Activated B cell treated with CpG ODN at 0.5 μM for 24 hours (primary cell): ENCODE measurements at regions of chr6 and their contacts with region 1.

Region 1: DNA sequence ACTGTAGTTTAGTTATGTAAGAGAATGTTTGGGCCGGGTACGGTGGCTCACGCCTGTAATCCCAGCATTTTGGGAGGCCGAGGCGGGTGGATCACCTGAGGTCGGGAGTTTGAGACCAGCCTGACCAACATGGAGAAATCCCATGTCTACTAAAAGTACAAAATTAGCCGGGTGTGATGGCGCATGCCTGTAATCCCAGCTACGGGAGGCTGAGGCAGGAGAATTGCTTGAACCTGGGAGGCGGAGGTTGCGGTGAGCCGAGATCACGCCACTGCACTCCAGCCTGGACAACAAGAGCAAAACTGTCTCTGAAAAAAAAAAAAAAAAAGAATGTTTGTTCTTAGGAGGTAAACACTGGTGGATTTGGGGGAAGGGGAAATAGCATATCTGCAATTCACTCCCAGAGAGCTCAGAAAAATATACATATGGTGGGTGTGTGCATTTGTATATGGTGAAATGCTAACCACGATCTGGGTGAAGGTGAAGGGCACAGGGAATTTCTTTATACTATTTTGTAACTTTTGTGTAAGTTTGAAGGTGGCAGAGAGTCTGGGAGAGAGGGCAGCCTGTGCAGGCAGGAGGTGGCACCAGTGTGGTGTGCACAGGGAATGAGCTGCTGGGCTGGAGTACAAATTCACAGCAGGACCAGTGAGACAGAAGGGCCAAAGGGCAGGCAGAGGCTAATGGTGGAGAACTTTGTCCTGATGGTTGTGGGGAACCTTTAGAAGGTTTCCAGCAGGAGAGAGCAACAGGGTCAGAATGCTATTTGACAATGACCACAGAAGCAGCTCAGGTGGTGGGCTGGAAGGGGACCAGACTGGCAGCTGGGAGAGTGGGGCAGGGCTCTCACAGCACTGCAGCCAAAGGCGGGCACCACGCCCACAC is 42.4 kb downstream of the SSR1 start:
- DNase-seq: no peak
- ATAC-seq: no peak
- H3K4me3 Mint-ChIP-seq: no peak overlapping the region
- H3K27ac Mint-ChIP-seq: no peak overlapping the region
- H3K4me1 Mint-ChIP-seq: peaks cover under 1% of the 10 kb centered on the region
- H3K27me3 Mint-ChIP-seq: peaks cover 4% of the 10 kb centered on the region
- CTCF ChIP-seq: no peak

Region 2: DNA sequence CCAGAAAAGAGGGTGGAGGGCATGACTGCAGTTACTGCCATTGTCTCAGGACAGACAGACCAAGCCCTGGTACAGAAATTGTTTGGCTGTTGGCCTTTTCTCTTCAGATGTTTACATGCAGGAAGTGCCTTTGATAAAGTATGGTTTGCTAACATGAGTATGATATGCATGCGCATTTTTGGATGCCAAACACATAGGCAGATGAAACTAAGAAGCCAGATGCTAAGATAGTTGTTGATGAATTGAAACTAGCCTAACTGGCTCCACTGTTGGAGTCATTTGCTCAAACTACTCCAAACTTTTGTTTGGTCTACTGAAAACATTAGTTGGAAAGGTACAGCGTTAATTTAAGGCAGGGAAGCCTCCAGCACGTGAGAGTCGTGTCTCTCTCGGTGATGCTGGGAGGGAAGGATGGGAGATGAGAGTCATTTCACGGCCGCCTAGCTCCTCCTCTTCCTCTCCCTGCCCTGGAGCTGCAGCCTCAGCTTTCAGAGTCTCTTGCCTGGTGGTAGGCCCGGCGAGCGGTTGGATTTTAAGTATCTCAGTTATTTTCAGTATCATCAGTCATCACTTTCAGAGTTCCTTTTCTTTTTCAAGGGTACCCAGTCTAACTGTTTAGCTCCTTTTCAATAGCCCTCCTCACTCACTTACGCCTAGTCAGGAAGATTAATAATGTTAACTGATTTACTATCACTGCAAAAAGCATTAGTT is 133.1 kb before region 1 on chr6:
- CTCF ChIA-PET with region 1: no interaction called
- POLR2A ChIA-PET with region 1: no interaction called
- intact Hi-C with region 1: no loop called
- DNase-seq: no peak
- ATAC-seq: peak; percentile 33
- H3K4me3 Mint-ChIP-seq: peak overlapping the region; percentile 77
- H3K27ac Mint-ChIP-seq: peak overlapping the region; percentile 96
- H3K4me1 Mint-ChIP-seq: peaks cover 80% of the 10 kb centered on the region
- H3K27me3 Mint-ChIP-seq: no peaks in the 10 kb centered on the region
- CTCF ChIP-seq: no peak

Region 3: DNA sequence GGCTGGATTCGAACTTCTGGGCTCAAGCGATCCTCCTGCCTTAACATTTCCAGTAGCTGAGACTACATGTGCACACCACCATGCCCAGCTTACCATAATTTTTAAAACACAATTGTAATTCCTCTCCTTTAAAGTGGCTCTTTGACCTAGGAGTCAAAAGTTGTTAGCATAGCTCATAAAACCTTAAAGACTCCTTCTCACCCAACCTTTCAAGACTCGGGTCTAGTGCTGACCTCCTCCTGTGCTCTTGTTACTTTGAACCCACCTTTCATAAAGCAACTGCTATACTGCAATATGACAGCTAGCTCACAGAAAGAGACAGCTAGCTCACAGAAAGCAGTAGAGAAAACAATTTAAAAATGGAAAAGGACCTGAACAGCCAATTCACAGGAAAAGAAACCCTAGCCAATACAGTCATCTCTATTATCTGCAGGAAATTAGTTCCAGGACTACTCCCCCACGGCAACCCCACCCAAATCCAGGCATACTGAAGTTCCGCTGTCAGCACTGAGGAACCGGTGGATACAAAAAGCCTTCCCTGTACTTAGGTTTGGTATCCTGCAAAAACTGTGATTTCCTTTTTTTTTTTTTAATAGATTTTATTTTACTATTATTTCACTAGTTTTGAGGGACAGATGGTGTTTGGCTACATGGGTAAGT is 22.2 kb after region 1 on chr6:
- CTCF ChIA-PET with region 1: interaction called, 10 read pairs
- POLR2A ChIA-PET with region 1: no interaction called
- intact Hi-C with region 1: no loop called
- DNase-seq: no peak
- ATAC-seq: no peak
- H3K4me3 Mint-ChIP-seq: no peak overlapping the region
- H3K27ac Mint-ChIP-seq: no peak overlapping the region
- H3K4me1 Mint-ChIP-seq: peaks cover 2% of the 10 kb centered on the region
- H3K27me3 Mint-ChIP-seq: no peaks in the 10 kb centered on the region
- CTCF ChIP-seq: no peak

Region 4: DNA sequence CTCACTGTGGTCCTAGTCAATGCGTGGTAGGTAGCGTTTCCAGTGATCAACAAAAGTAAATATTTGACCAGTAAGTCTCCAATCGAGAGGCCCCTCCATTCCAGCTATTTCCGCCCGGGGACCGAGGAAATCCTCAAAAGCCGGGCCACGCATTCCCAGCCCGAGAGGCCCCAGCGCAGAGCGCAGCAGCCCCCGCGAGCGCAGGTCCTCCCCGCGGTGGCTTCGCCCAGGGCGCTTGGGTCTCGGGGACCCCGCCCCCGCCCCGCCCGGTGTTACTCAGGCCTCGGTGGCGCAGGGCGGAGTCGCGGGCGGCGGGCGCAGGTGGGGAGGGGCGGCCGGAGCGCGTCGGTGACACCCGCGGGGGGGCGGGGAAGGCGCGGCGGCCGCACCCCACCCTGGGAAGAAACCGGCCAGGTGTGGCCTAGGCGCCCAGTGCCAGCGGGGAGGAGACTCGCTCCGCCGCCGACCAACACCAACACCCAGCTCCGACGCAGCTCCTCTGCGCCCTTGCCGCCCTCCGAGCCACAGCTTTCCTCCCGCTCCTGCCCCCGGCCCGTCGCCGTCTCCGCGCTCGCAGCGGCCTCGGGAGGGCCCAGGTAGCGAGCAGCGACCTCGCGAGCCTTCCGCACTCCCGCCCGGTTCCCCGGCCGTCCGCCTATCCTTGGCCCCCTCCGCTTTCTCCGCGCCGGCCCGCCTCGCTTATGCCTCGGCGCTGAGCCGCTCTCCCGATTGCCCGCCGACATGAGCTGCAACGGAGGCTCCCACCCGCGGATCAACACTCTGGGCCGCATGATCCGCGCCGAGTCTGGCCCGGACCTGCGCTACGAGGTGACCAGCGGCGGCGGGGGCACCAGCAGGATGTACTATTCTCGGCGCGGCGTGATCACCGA is 270.9 kb after region 1 on chr6 and contains the start of gene DSP:
- CTCF ChIA-PET with region 1: no interaction called
- POLR2A ChIA-PET with region 1: no interaction called
- intact Hi-C with region 1: no loop called
- DNase-seq: peak; percentile 35
- ATAC-seq: peak; percentile 76
- H3K4me3 Mint-ChIP-seq: peak within 1 kb of the TSS; percentile 81
- H3K27ac Mint-ChIP-seq: no peak within 1 kb of the TSS
- H3K4me1 Mint-ChIP-seq: peaks cover 13% of the 10 kb centered on the region
- H3K27me3 Mint-ChIP-seq: peaks cover 58% of the 10 kb centered on the region
- CTCF ChIP-seq: no peak
- total RNA-seq, gene DSP: 0.02 TPM in 2 replicates